Activated T-helper 2 cell treated with anti-CD3 and anti-CD28 coated beads, Interferon-gamma antibody, Interleukin-2, Interleukin-4, amounts not matched to agents 10 μg/mL and 5 μg/mL and 100 μg/mL, durations not matched to agents 14 hours and 24 hours and 36 hours (primary cell): ENCODE measurements at regions of chr4 and their contacts with region 1.

Region 1: GRCh38 chr4:56387023-56388001 is at the start of gene AASDH:
- DNase-seq: peak; percentile 91
- H3K4me3 Mint-ChIP-seq: peak within 1 kb of the TSS; percentile 92
- H3K27ac Mint-ChIP-seq: peak within 1 kb of the TSS; percentile 98
- H3K4me1 Mint-ChIP-seq: peaks cover 25% of the 10 kb centered on the region
- H3K27me3 Mint-ChIP-seq: no peaks in the 10 kb centered on the region
- total RNA-seq, gene AASDH: 10.4 and 15.4 TPM in 2 replicates

Region 2: DNA sequence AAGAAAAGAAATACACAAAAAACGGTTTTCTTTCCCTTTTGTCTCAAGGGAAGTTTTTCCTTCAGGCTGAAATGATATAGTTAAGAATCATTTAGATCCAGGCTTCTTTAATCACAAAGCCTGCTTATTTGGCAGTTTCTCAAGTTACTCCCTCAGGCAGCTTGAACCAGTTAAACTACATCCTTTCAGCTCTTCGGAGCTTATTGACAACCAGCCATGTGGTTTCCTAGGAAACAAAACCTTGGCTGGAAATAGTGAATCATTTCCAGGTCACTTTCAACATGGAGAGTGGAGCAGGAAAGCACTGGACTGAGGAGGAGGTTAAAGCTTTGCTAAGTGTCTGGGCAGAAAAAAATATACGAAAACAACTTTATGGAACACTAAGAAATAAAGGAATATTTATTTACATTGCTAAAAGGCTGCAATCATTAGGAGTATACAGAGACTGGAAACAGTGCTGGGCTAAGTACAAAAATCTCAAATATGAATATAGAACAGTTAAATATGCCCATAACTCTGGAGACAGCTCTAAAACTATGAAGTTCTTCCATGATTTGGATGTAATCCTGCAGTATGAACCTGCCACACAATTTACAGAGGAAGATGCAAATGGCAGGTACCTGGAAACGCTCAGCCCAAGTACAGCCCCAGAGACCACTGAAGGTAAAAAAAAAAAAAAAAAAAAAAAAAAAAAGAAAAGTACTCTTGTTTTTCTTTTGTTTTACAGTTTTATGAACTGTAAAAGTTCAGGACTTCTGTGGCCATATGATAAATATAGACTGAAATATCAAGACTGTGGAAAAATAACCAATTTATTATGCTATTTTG is 23.1 kb after region 1 on chr4:
- intact Hi-C with region 1: loop called (anchors 2 kb)
- DNase-seq: no peak
- H3K4me3 Mint-ChIP-seq: no peak overlapping the region
- H3K27ac Mint-ChIP-seq: peak overlapping the region; percentile 45
- H3K4me1 Mint-ChIP-seq: peaks cover 17% of the 10 kb centered on the region
- H3K27me3 Mint-ChIP-seq: no peaks in the 10 kb centered on the region

Region 3: GRCh38 chr4:56786955-56787354 is 399.6 kb after region 1 on chr4:
- intact Hi-C with region 1: no loop called
- DNase-seq: no peak
- H3K4me3 Mint-ChIP-seq: no peak overlapping the region
- H3K27ac Mint-ChIP-seq: no peak overlapping the region
- H3K4me1 Mint-ChIP-seq: no peaks in the 10 kb centered on the region
- H3K27me3 Mint-ChIP-seq: peaks cover 16% of the 10 kb centered on the region

Region 4: GRCh38 chr4:56977321-56978012 is 590.2 kb after region 1 on chr4 and contains the start of gene NOA1:
- intact Hi-C with region 1: loop called (anchors 1 kb)
- DNase-seq: peak; percentile 98
- H3K4me3 Mint-ChIP-seq: peak within 1 kb of the TSS; percentile 100
- H3K27ac Mint-ChIP-seq: peak within 1 kb of the TSS; percentile 100
- H3K4me1 Mint-ChIP-seq: peaks cover 41% of the 10 kb centered on the region
- H3K27me3 Mint-ChIP-seq: no peaks in the 10 kb centered on the region
- total RNA-seq, gene NOA1: 16.5 and 18.1 TPM in 2 replicates